ENCODE measurements at regions of chr20 and their contacts with region 1.

Region 1: DNA sequence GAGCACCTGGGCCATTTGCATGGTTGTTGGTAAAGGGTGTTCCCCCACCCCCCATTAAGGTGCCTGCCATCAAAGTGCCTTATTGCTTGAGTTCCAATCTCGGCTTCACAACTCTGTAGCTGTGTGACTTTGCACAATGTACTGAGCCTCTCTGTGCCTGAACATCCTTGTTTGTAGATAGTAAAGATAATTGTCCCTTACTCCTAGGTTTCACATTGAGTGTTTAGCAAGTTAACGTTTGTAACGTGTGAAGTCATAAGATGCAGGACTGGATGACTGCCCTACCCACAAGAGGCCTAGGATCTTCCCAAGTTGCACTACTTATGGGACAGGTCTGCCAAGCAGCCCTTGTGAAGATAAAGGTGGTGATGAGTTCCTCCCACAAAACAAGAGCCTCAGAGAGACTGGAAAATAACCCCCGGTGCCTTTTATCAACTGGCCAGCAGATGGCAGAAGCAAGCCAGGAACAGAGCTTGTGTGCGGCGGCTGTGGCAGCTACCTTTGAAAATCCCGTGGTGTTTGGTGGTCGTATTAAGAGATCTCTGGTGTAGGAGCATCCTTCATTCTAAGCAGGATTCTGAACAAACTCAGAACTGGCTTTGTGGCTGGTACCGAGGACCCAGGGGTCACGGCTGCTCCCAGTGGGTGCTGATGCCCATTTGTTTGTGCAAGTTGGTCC is 99.0 kb downstream of the CDH26 start:
- DNase-seq: peak; percentile 69
- ATAC-seq: peak; percentile 58
- H3K4me3 Mint-ChIP-seq: no peak overlapping the region
- H3K27ac Mint-ChIP-seq: no peak overlapping the region
- H3K4me1 Mint-ChIP-seq: peaks cover 13% of the 10 kb centered on the region
- H3K27me3 Mint-ChIP-seq: peaks cover 12% of the 10 kb centered on the region
- CTCF ChIP-seq: peak; percentile 63

Region 2: DNA sequence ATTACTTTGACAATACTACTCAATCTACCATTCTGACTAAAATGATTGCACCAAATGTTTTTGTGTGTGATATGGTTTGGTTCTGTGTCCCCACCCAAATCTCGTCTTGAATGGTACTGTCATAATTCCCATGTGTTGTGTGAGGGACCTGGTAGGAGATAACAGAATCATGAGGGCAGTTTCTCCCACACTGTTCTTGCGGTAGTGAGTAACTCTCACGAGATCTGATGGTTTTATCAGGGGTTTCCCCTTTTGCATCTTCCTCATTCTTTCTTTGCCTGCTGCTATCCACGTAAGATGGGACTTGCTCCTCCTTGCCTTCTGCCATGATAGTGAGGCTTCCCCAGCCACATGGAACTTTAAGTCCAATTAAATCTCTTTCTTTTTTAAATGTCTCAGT is 144.7 kb before region 1 on chr20:
- CTCF ChIA-PET with region 1: no interaction called
- POLR2A ChIA-PET with region 1: no interaction called
- DNase-seq: no peak
- ATAC-seq: no peak
- H3K4me3 Mint-ChIP-seq: no peak overlapping the region
- H3K27ac Mint-ChIP-seq: no peak overlapping the region
- H3K4me1 Mint-ChIP-seq: 0 out of 2 replicates have a peak, but pooled peaks cover under 1% of the 10 kb centered on the region
- H3K27me3 Mint-ChIP-seq: peaks cover 10% of the 10 kb centered on the region
- CTCF ChIP-seq: no peak

Region 3: GRCh38 chr20:59948828-59949720 is 108.2 kb before region 1 on chr20:
- CTCF ChIA-PET with region 1: interaction called, 12 read pairs
- POLR2A ChIA-PET with region 1: no interaction called
- DNase-seq: no peak
- ATAC-seq: no peak
- H3K4me3 Mint-ChIP-seq: no peak overlapping the region
- H3K27ac Mint-ChIP-seq: no peak overlapping the region
- H3K4me1 Mint-ChIP-seq: peaks cover 9% of the 10 kb centered on the region
- H3K27me3 Mint-ChIP-seq: no peaks in the 10 kb centered on the region
- CTCF ChIP-seq: peak; percentile 10; the same call in 1 of the 2 replicates

Region 4: GRCh38 chr20:59994697-59995122 is 62.6 kb before region 1 on chr20:
- CTCF ChIA-PET with region 1: interaction called, 10 read pairs
- POLR2A ChIA-PET with region 1: no interaction called
- DNase-seq: peak; percentile 78
- ATAC-seq: peak; percentile 97
- H3K4me3 Mint-ChIP-seq: peak overlapping the region; percentile 69
- H3K27ac Mint-ChIP-seq: peak overlapping the region; percentile 94
- H3K4me1 Mint-ChIP-seq: peaks cover 35% of the 10 kb centered on the region
- H3K27me3 Mint-ChIP-seq: peaks cover 14% of the 10 kb centered on the region
- CTCF ChIP-seq: no peak

Region 5: DNA sequence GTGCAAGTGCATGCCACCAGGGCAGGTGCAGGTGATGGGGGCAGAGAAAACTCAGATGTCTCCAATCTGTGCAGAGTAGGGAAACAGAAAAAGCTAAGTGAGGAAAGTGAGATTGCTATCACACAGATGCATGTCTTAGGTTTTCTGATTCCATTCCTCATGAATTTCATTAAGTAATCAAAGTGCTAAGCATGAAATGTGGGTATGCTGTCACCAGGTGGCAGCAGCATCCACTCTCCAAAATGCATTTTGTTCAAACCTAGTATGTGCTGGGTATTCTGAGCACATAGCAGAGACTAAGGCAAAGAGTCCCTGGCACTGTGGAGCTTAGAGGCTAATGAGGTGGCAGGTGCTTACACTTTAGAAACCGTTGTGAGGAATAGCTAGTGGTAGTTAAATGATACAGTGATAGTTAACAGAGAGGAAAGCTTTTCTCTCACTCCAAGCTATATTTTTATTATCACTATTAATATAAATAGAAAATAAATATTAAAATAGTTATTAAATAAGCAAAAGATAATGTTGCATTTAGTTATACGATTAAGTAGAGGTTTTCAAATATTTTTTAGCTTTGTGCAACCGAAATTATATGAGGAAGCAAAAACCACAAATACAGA is 80.5 kb after region 1 on chr20:
- CTCF ChIA-PET with region 1: interaction called, 13 read pairs
- POLR2A ChIA-PET with region 1: no interaction called
- DNase-seq: peak; percentile 42
- ATAC-seq: peak; percentile 65
- H3K4me3 Mint-ChIP-seq: no peak overlapping the region
- H3K27ac Mint-ChIP-seq: no peak overlapping the region
- H3K4me1 Mint-ChIP-seq: no peaks in the 10 kb centered on the region
- H3K27me3 Mint-ChIP-seq: peaks cover 30% of the 10 kb centered on the region
- CTCF ChIP-seq: peak; percentile 39; the same call in 1 of the 2 replicates

Region 6: DNA sequence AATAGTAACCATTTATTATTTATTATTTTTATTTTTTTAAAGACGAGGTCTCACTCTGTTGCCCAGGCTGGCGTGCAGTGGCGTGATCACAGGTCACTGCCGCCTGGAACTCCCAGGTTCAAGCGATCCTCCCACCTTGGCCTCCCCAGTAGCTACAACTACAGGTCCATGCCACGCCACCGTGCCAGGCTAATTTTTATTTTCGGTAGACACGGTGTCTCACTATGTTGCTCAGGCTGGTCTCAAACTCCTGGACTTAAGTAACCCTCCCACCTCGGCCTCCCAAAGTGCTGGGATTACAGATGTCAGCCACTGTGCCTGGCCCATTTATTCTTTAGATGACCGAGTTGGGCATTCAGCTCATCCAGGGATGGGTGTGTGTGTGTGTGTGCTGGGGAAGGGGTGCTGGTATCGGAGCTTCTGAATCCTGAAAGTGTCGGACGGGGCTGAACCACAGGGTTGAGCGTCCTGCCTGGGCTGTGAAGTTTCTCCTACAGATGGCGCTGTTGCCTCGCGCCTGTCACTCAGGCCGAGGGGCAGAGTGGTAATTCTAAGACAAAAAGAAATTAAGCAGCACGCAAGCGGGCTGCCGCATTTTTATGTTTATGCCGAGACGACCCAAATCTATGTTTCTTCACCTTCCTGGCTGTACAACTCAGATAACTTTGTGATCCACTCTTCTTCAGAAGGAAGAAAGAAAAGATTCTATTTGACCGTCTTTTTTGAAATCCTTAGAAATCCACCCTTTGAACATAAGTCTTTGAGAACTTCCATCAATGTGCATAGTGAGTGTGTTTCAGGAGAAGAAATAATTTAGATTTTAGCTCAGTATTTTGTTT is 153.7 kb after region 1 on chr20:
- CTCF ChIA-PET with region 1: interaction called, 28 read pairs
- POLR2A ChIA-PET with region 1: no interaction called
- DNase-seq: peak; percentile 73
- ATAC-seq: peak; percentile 88
- H3K4me3 Mint-ChIP-seq: no peak overlapping the region
- H3K27ac Mint-ChIP-seq: no peak overlapping the region
- H3K4me1 Mint-ChIP-seq: peaks cover 4% of the 10 kb centered on the region; the same call in 1 of the 2 replicates
- H3K27me3 Mint-ChIP-seq: peaks cover 19% of the 10 kb centered on the region
- CTCF ChIP-seq: peak; percentile 78

Region 7: GRCh38 chr20:60453388-60454246 is 396.4 kb after region 1 on chr20:
- CTCF ChIA-PET with region 1: interaction called, 13 read pairs
- POLR2A ChIA-PET with region 1: no interaction called
- DNase-seq: peak; percentile 65
- ATAC-seq: peak; percentile 80
- H3K4me3 Mint-ChIP-seq: no peak overlapping the region
- H3K27ac Mint-ChIP-seq: no peak overlapping the region
- H3K4me1 Mint-ChIP-seq: peaks cover 5% of the 10 kb centered on the region; the same call in 1 of the 2 replicates
- H3K27me3 Mint-ChIP-seq: peaks cover 21% of the 10 kb centered on the region
- CTCF ChIP-seq: no peak